ENCODE measurements at regions of chr21 and their contacts with region 1.

Region 1: DNA sequence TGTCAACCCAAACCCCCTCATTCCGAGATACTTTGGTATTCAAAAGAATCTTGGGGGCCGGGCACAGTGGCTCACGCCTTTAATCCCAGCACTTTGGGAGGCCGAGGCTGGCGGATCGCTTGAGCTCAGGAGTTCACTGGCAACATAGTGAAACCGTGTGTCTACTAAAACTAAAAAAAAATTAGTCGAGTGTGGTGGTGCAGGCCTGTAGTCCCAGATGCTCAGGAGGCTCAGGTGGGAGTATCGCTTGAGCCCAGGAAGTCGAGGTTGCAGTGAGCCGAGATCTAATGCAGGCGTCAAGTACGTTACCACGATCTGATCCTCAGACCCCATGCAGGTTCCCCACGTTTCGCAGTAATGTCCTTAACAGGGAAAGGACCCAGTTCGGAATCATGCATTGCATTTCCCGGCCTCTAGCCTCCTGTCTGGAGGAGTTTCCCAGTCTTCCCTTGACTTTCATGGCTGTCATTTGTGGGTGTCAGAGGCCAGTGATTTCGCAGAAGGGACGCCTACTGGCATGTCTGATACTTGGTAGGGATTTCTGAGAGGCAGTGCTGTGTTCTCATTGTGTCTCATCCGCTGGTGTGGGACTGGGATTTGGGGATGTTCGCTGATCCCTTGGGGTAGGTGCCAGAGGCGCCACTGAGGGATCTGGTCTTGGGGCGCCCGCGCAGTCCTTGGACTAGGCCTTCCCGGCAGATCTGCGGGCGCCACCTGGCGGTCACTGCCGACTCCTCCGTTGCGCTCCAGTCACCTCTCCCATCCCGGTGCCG is 39.3 kb upstream of the HMGN1 start:
- DNase-seq: peak; percentile 96
- ATAC-seq: peak; percentile 82

Region 2: DNA sequence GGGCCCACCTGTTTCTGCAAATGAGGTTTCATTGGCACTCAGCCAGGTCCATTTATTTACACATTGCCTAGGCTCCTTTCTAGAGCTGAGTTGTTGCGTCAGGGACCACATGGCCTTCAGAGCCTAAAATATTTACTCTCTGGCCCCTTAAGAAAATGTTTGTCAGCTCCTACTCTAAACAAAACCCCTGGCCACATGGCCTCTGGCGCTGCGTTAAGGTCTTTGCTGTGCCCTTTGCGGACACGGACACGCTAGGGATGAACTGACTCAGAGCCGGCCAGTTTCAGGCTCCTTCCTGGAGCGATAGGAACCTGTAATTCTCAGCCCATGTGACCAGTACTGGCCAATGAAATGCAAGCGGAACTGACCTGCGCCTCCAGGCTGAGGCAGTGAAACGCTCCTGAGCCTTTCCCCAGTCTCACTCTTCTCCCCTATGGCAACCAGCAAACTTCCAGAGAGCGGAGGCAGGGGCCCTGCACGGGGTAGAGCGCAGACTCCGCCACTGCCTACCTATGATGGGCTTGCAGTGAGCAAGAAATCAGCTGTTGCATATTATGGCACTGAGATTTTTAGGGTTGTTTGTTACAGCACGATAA is 422.2 kb before region 1 on chr21:
- intact Hi-C with region 1: no loop called
- DNase-seq: no peak
- ATAC-seq: peak; percentile 61

Region 3: DNA sequence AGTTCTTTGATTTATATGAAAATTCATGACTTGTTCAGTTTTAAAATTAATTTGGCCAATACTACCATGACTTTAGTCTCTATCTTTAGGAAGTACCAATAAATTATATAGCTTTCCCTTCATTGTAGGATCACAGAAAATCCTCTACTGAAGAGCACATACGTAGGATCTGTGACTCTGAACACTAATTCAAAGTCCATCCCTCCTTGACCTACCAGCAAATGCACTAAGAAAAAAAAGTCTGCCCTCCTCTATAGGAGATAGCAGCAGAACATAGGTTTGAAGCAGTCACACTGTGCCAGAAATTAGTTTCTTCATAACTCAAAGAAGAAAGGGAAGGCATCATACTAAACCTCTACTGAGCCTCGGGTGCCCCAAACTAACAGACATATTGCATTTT is 91.3 kb before region 1 on chr21:
- intact Hi-C with region 1: no loop called
- DNase-seq: no peak
- ATAC-seq: no peak

Region 4: DNA sequence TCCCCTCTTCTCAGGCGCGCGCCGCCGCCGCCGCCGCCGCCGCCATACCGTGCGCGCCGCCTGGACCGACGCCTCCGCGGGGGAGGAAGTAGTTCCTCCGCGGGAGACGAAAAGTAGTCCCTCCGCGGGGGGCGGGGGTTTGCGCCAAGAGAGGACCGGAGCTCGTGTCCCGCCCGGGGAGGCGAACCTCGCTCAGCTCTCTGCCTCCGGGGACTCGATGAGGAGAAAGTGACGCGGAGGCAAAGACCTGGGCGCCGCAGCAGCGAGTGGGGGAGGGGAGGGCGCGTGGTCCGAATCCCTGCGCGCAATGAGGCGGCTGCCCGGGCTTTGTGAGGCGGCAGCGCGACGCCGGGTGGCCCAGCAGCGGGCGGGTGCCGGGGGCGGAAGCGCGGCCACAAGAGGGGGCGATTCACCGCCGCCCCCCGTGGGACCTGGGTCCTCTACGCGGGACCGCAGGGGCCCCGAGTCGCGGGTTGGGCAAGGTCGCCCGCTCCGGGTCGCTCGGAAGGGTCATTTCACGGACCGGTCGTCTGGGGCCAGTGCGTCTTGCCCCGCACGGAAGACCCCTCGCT is 74.6 kb before region 1 on chr21 and contains the start of gene BRWD1:
- intact Hi-C with region 1: loop called (anchors 10 kb)
- DNase-seq: peak; percentile 92
- ATAC-seq: peak; percentile 82
- total RNA-seq, gene BRWD1: 34.2 TPM

Region 5: DNA sequence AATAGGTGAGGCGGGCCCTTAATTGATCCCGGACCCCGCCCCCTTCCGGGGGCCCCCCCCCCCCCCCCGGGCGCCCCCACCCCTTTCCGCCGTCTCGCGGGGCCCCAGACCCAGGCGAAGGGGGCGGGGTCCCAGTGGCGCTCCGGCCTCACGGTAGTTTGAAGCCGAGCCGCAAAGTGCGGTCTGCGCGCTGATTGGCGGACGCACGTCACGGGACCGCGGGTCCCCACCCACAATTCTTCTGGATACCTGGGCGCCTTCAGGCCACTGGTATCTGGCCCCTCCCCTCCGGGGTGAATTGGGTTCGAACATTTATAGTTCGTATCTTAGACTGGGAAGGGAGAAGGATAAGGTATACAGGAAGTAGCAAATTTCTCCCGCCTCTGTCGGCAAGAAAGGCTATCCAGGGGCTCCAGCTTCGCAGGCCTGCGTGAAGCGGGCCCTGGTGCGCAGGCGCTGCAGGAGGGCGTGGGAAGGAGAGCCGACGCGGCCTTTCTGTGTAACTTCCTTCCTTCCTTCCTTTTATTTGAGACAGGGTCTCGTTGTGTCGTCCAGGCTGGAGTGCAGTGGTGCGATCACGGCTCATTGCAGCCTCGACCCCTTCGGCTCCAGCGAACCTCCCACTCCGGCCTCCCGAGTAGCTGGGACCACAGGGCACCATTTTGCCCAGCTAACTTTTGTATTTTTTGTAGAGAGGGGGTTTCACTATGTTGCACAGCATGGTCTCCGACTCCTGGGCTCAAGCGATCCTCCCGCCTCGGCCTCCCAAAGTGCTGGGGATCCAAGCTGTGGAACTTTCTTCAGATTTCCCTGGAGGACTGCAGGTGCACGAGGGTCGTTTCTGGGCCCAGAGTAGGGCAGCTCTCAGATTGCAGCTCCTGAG is 38.8 kb before region 1 on chr21:
- intact Hi-C with region 1: loop called (anchors 5 kb)
- DNase-seq: peak; percentile 98
- ATAC-seq: peak; percentile 97

Measured in left ventricle myocardium superior (tissue), 1 donor.